ENCODE measurements at regions of chr20 and their contacts with region 1.

Region 1: DNA sequence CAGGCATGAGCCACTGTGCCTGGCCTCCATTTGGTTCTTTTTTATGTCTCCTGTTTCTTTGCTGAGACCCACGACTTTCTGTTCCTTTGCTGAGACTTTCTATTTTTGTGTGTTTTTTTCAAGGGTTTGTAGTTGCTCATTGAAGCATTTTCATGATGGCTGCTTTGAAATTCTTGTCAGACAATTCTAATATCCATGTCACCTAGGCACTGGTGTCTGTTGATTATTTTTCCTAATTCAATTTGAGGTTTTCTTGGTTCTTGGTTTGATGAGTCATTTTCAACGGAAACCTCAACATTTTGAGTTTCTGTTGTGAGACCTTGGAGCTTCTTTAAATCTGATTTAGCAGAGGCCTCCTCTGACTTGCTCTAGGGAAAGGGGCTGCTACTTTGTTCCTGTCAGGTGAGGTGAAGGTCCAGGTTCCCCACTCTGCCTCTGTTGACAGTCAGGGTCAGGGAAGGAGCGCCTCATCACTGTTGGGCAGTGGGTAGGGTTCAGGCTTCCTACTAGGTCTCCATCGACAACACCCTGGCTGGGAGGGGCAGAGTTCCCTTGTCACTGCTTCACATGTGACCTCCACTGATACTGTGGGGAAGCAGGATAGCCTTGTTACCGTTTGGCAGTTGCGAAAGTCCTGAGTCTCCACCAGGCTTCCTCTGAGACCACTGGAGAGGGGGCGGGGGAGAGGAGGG is 67.2 kb upstream of the RNF24 start:
- DNase-seq: peak in 1 of 2 donors; percentile 69
- ATAC-seq: peak; percentile 26
- H3K4me3 ChIP-seq: no peak overlapping the region
- H3K27ac ChIP-seq: peak overlapping the region; percentile 70 to 92
- H3K4me1 ChIP-seq: peaks cover 5% of the 10 kb centered on the region in 2 donors
- H3K27me3 ChIP-seq: no peaks in the 10 kb centered on the region

Region 2: DNA sequence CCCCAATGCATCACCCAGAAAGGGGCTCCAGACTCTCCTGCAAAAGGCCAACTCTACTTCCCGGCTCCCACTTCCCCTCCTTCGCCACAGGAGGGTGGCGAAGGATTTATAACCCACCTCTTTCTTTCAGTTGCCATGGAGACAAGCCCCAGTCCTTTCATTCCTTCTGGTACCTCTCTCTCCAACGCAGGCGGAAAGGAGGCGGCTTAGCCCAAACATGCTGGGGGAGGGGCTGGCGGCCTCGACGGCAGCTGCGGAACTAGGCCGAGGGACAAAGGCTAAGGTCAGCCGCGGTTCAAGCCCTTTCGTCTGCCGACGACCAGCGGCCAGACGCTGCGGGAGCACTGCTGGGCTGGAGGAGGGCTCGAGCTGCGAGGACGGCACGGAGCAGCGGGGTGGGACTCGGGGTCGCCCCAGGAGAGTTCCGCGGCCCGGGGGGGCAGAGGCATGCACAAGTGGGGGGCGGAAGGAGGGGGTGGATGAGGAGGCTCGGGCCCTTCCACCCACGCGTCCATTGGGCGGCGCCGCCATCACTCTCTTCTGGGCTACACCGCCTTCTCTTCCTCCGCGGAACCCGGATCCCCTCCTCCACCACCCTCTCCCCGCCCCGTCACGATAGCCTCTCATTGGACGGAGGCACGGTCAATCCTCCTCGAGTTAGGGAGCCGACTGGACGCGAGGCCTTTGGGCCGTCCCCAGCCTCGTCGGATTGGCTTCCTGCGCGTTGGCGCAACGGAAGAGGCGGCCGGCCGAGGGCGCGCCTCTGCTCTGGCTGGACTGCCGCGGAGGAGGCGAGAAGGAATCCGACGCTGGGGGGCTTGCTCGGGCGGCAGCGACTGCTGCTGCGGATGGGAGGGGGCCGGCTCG is 193.7 kb before region 1 on chr20 and contains the start of gene PANK2:
- intact Hi-C with region 1: loop called in 1 of 2 experiments (anchors 2 kb)
- DNase-seq: peak; percentile 100
- ATAC-seq: peak; percentile 98
- H3K4me3 ChIP-seq: peak within 1 kb of the TSS; percentile 88 to 89
- H3K27ac ChIP-seq: peak within 1 kb of the TSS; percentile 85 to 86
- H3K4me1 ChIP-seq: no peaks in the 10 kb centered on the region
- H3K27me3 ChIP-seq: no peaks in the 10 kb centered on the region
- total RNA-seq, gene PANK2: 45.7 to 53.2 TPM

Region 3: GRCh38 chr20:3932681-3933080 is 149.9 kb before region 1 on chr20:
- intact Hi-C with region 1: loop called (anchors 5 to 10 kb)
- DNase-seq: no peak
- ATAC-seq: no peak
- H3K4me3 ChIP-seq: peak overlapping the region in 1 of 2 donors; percentile 36
- H3K27ac ChIP-seq: peak overlapping the region; percentile 64 to 68
- H3K4me1 ChIP-seq: peaks cover 7 to 10% of the 10 kb centered on the region in 2 donors
- H3K27me3 ChIP-seq: no peaks in the 10 kb centered on the region

Region 4: GRCh38 chr20:4064144-4064909 is 18.2 kb before region 1 on chr20:
- intact Hi-C with region 1: loop called in 1 of 2 experiments (anchors 2 kb)
- DNase-seq: peak; percentile 95 to 97
- ATAC-seq: peak; percentile 91
- H3K4me3 ChIP-seq: no peak overlapping the region
- H3K27ac ChIP-seq: peak overlapping the region; percentile 62 to 64
- H3K4me1 ChIP-seq: peaks cover 0 to 12% of the 10 kb centered on the region in 2 donors
- H3K27me3 ChIP-seq: no peaks in the 10 kb centered on the region

Measured in aorta (tissue), 5 donors.